ENCODE measurements at regions of chr5 and their contacts with region 1.

Region 1: GRCh38 chr5:3958389-3958788 is 362.8 kb downstream of the IRX1 start:
- DNase-seq: no peak
- H3K4me3 ChIP-seq: no peak overlapping the region
- CTCF ChIP-seq: no peak
- POLR2A ChIP-seq: no peak

Region 2: GRCh38 chr5:5378531-5378930 is 1420.1 kb after region 1 on chr5:
- intact Hi-C with region 1: loop called (anchors 5 kb)
- DNase-seq: no peak
- H3K4me3 ChIP-seq: no peak overlapping the region
- CTCF ChIP-seq: no peak
- POLR2A ChIP-seq: no peak

Region 3: GRCh38 chr5:5453131-5453530 is 1494.7 kb after region 1 on chr5:
- intact Hi-C with region 1: no loop called
- DNase-seq: no peak
- H3K4me3 ChIP-seq: no peak overlapping the region
- CTCF ChIP-seq: no peak
- POLR2A ChIP-seq: no peak

Measured in lower leg skin (tissue), 4 donors.